ENCODE measurements at regions of chrX and their contacts with region 1.

Region 1: DNA sequence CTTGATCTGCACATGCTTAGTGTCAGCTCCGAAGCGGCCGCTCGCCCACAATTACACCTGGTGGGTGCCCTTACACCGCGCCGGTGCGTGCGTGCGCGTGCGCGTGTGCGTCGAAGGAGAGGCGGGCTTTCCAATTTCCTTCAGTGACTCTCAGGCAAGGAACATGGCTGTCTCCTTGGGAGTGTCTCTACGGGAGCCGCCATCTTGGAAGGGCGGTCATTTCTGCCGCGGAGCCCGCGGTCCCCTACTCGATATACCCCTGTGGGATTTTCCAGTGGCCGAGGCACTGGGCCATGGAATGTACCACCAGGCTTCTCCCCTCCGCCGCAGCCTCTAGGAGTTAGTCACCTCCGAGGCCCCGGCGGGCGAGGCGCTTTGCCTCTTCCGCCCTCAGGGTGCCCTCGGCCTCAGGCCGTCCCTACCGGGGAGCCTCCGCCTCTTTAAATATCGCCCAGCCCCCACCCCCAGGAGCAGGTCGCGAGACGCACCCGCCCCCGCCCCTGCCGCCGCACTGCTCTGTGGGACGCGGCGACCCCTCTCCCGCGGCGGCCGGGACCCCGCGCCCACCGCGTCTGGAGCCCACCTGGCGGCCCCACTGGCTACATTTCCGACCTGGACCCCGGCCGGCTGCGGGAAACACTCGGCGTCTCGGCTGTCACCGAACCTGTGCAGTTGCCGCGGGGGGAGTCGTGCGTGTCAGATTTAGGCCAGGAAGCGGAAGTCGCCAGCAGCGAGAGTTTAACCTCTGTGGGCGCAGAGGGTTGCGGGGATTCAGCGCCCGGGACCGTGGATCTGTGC is at the start of gene ZNF41:
- DNase-seq: peak; percentile 48 to 84 (median 76)
- ATAC-seq: peak; percentile 95
- H3K4me3 ChIP-seq: peak within 1 kb of the TSS; percentile 85
- H3K4me3 Mint-ChIP-seq: peak within 1 kb of the TSS; percentile 81 to 97 (median 90)
- H3K27ac ChIP-seq: peak within 1 kb of the TSS; percentile 88
- H3K27ac Mint-ChIP-seq: peak within 1 kb of the TSS; percentile 82 to 98 (median 96)
- H3K4me1 ChIP-seq: peaks cover 9 to 22% of the 10 kb centered on the region in 2 donors
- H3K4me1 Mint-ChIP-seq: peaks cover 22 to 50% (median 37%) of the 10 kb centered on the region in 7 donors
- H3K27me3 ChIP-seq: no peaks in the 10 kb centered on the region
- H3K27me3 Mint-ChIP-seq: no peaks in the 10 kb centered on the region
- total RNA-seq, gene ZNF41: 7.5 to 17.8 (median 14.7) TPM

Region 2: DNA sequence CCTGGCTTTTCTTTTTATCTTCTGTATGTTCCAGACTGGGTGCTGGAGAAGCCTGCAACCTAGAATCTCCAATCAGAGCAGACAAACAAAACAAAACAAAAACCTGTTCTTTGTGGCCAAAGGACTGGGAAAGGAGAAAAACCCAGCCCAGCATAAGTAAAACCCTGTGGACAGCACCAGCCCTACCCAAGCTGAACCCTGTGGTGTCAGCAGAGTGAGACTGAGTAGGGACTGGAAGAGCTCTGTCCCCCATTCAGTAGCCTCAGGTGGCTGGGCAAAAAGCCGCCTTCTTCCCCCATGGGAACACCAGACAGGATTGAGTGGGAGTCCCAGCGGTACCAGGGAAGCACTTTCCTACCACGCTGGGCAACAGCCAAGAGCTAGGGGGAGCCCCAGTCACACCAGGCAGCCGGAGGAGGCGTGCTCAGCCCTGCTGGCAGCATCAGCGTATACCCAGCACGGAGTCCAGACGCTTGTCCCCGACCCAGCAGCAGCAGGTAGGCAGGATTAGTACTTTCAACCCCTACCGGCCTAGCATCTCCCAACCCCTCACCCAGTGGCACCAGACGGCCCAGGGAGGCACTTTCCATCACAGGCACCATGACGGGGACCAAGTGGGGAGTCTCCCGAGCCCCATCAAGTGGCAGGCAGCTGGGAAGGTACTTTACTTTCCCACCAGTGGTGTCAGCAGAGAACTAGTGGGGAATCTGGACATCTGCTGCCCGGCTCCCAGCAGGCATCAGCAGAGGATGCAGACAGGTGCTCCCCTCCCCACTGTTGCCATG is 579.1 kb before region 1 on chrX:
- CTCF ChIA-PET with region 1: no interaction called
- POLR2A ChIA-PET with region 1: no interaction called
- intact Hi-C with region 1: no loop called
- DNase-seq: peak; percentile 15 to 57 (median 37)
- ATAC-seq: peak; percentile 95
- H3K4me3 ChIP-seq: peak overlapping the region; percentile 27
- H3K4me3 Mint-ChIP-seq: peak overlapping the region in 9 of 10 donors; percentile 25 to 77 (median 58)
- H3K27ac ChIP-seq: no peak overlapping the region
- H3K27ac Mint-ChIP-seq: no peak overlapping the region
- H3K4me1 ChIP-seq: no peaks in the 10 kb centered on the region
- H3K4me1 Mint-ChIP-seq: no peaks in the 10 kb centered on the region
- H3K27me3 ChIP-seq: no peaks in the 10 kb centered on the region
- H3K27me3 Mint-ChIP-seq: peaks cover 0 to 30% (median 0%) of the 10 kb centered on the region in 5 donors

Region 3: GRCh38 chrX:47144626-47145394 is 337.9 kb before region 1 on chrX and contains the starts of genes NDUFB11 and RBM10:
- CTCF ChIA-PET with region 1: no interaction called
- POLR2A ChIA-PET with region 1: no interaction called
- intact Hi-C with region 1: loop called (anchors 1 kb)
- DNase-seq: peak; percentile 64 to 90 (median 87)
- ATAC-seq: peak; percentile 95
- H3K4me3 ChIP-seq: peak within 1 kb of the TSS; percentile 77
- H3K4me3 Mint-ChIP-seq: peak within 1 kb of the TSS; percentile 92 to 99 (median 96)
- H3K27ac ChIP-seq: peak within 1 kb of the TSS; percentile 94
- H3K27ac Mint-ChIP-seq: peak within 1 kb of the TSS; percentile 93 to 99 (median 96)
- H3K4me1 ChIP-seq: peaks cover 6 to 12% of the 10 kb centered on the region in 2 donors
- H3K4me1 Mint-ChIP-seq: peaks cover 6 to 42% (median 26%) of the 10 kb centered on the region in 7 donors
- H3K27me3 ChIP-seq: no peaks in the 10 kb centered on the region
- H3K27me3 Mint-ChIP-seq: no peaks in the 10 kb centered on the region
- total RNA-seq, gene NDUFB11: 51.3 to 92.5 (median 55.2) TPM
- total RNA-seq, gene RBM10: 31.8 to 55.6 (median 47.6) TPM

Region 4: DNA sequence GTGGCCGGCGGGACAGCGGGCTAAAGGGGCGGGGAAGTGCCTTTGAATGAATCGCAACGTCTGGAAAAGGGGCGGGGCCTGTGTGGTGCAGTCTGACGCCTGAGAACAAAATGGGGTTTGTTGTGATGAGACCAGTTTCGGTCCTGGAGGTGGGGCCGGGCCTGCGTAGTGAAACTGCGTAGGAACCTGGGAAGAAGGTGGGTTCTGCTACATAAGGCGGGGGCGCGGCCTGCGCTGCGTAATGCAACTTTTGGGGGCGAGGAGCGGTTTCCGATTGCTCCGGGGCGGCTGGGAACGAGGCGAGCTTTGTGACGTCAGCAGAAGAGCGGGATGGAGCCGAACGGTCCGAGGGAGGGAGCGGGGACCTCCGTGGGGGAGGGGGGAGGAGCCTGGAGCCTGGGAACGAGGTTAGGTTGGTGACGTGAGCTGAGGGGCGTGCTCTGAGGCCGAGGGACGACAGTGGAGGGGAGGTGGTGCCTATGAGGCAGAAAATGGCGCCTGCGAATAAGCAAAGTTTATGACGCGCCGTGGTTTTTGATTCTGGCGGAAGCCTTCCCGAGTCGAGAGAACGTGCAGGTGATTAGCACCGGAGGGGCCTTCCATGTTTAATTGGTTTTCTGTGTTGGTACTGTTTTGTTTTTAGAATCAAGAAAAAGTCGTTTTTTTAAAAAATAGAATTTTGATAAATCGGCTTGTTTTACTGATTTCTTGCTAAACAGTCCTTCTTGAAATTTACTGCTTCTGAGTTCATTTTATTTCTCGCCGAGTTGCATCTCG is 249.2 kb before region 1 on chrX:
- CTCF ChIA-PET with region 1: no interaction called
- POLR2A ChIA-PET with region 1: no interaction called
- intact Hi-C with region 1: loop called (anchors 1 to 2 kb)
- DNase-seq: peak; percentile 71 to 97 (median 94)
- ATAC-seq: peak; percentile 92
- H3K4me3 ChIP-seq: peak overlapping the region; percentile 74
- H3K4me3 Mint-ChIP-seq: peak overlapping the region; percentile 84 to 98 (median 90)
- H3K27ac ChIP-seq: peak overlapping the region; percentile 99
- H3K27ac Mint-ChIP-seq: peak overlapping the region; percentile 94 to 100 (median 98)
- H3K4me1 ChIP-seq: peaks cover 0 to 14% of the 10 kb centered on the region in 2 donors
- H3K4me1 Mint-ChIP-seq: peaks cover 8 to 49% (median 24%) of the 10 kb centered on the region in 7 donors
- H3K27me3 ChIP-seq: no peaks in the 10 kb centered on the region
- H3K27me3 Mint-ChIP-seq: peaks cover 0 to 4% (median 0%) of the 10 kb centered on the region in 5 donors

Region 5: DNA sequence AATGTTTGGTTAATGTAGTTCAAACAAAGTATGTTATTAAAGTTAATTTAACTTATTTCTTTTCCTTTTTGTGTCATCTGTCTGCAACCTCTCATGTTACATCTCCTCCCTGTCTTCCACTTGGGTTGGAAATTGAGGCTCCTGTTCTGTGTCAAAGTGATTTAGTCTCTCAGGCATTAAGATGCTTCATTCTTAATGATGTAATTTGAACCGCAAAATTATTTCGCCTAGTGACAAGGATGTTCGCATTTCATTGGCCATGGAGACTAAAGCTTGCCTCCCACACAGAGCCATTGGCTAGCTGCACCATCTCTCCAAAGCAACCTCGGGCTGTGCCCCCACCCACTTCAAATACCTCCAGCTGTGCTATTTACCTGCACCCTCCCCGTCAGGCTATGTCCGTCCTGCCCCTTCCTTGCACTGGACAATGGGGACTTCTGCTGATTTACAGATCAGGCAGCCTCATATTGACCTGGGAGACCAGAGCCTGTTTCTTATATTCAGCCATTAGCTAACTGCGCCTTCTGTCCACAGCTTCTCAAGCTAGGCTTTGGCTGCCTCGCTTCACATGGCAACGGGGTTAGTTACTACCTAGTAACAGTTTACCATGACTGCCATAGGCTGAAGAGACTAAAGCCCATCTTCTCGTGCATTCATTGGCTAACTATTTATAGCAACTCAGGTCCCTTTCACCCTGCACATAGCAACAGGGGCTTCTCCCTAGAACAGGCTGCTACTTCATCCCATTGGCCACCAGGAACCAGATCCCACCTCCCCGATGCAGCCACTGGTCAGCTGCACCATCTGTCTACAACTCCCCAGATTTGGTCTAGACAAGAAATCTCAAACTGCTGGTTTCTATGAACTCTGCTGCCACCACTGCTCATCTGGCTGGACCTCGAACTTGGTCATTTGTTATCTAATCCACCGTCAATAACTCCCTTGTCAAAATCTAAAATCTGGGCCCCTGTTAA is 120.9 kb before region 1 on chrX:
- CTCF ChIA-PET with region 1: no interaction called
- POLR2A ChIA-PET with region 1: no interaction called
- intact Hi-C with region 1: loop called in 1 of 2 experiments (anchors 1 kb)
- DNase-seq: peak in 3 of 9 donors; percentile 8 to 16 (median 10)
- ATAC-seq: peak; percentile 75
- H3K4me3 ChIP-seq: no peak overlapping the region
- H3K4me3 Mint-ChIP-seq: peak overlapping the region in 5 of 10 donors; percentile 3 to 29 (median 24)
- H3K27ac ChIP-seq: no peak overlapping the region
- H3K27ac Mint-ChIP-seq: peak overlapping the region in 4 of 9 donors; percentile 15 to 40 (median 31)
- H3K4me1 ChIP-seq: peaks cover 6 to 9% of the 10 kb centered on the region in 2 donors
- H3K4me1 Mint-ChIP-seq: peaks cover 10 to 48% (median 30%) of the 10 kb centered on the region in 7 donors
- H3K27me3 ChIP-seq: no peaks in the 10 kb centered on the region
- H3K27me3 Mint-ChIP-seq: no peaks in the 10 kb centered on the region

Region 6: GRCh38 chrX:47523297-47523696 is 40.6 kb after region 1 on chrX:
- CTCF ChIA-PET with region 1: no interaction called
- POLR2A ChIA-PET with region 1: no interaction called
- intact Hi-C with region 1: loop called (anchors 1 kb)
- DNase-seq: peak; percentile 50 to 85 (median 66)
- ATAC-seq: peak; percentile 99
- H3K4me3 ChIP-seq: peak overlapping the region; percentile 43
- H3K4me3 Mint-ChIP-seq: peak overlapping the region; percentile 66 to 82 (median 74)
- H3K27ac ChIP-seq: peak overlapping the region; percentile 3
- H3K27ac Mint-ChIP-seq: peak overlapping the region in 3 of 9 donors; percentile 42 to 47 (median 43)
- H3K4me1 ChIP-seq: no peaks in the 10 kb centered on the region
- H3K4me1 Mint-ChIP-seq: peaks cover 0 to 8% (median 0%) of the 10 kb centered on the region in 7 donors
- H3K27me3 ChIP-seq: no peaks in the 10 kb centered on the region
- H3K27me3 Mint-ChIP-seq: peaks cover 0 to 2% (median 0%) of the 10 kb centered on the region in 5 donors

Region 7: DNA sequence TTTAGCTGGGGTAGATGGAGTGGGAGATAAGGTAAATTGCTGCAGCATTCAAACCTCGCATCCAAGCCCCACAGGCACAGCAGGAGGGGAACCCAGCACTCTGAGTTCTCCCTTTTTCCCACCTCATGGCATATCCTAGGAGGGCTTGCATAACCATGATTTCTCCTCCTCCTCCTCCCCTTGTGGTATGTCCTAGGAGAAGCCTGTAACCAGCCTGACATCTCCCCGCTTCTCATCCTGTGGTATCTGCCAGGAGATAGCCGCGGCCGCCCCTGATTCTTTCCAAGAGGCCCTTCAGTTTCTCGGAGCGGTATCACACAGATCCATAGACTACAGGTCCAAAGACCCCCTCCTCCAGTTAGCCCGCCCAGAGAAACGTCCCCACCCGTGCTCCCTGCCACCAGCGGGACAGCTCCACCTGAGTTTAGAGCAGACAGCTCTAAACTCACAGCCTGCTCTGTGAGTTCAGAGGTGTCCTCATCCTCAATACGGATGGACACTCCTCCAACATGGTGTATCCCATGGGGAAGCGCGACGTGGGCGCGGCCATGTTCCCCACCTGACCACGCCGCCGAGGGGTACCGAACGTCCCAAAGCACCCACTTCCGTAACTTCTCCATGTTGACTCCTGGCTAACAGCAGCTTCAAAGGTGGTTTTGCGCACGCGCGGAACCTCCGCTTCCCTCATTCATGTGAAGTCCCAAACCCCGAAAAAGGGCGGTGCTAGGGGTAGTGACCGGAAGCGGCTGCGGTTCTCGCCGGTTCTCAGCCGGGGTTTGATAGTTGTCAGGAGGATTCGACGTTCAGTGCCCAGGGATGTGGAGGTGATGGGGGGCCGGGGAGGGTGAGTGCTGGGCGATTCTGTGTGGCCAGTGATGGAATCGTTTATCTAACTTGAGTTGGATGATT is 353.7 kb after region 1 on chrX and contains the start of gene ZNF81:
- CTCF ChIA-PET with region 1: no interaction called
- POLR2A ChIA-PET with region 1: no interaction called
- intact Hi-C with region 1: loop called (anchors 5 to 10 kb)
- DNase-seq: peak; percentile 73 to 91 (median 83)
- ATAC-seq: peak; percentile 96
- H3K4me3 ChIP-seq: peak within 1 kb of the TSS; percentile 67
- H3K4me3 Mint-ChIP-seq: peak within 1 kb of the TSS; percentile 96 to 99 (median 98)
- H3K27ac ChIP-seq: peak within 1 kb of the TSS; percentile 79
- H3K27ac Mint-ChIP-seq: peak within 1 kb of the TSS; percentile 94 to 99 (median 97)
- H3K4me1 ChIP-seq: peaks cover 4 to 6% of the 10 kb centered on the region in 2 donors
- H3K4me1 Mint-ChIP-seq: peaks cover 1 to 36% (median 26%) of the 10 kb centered on the region in 7 donors
- H3K27me3 ChIP-seq: no peaks in the 10 kb centered on the region
- H3K27me3 Mint-ChIP-seq: no peaks in the 10 kb centered on the region
- total RNA-seq, gene ZNF81: 11.0 to 14.7 (median 11.7) TPM